Natural killer cell (primary cell): ENCODE measurements at regions of chr21 and their contacts with region 1.

Region 1: GRCh38 chr21:44709426-44710293 is 1.7 kb downstream of the TSPEAR start:
- DNase-seq: peak in 1 of 2 donors; percentile 53
- ATAC-seq: peak in 2 of 3 donors; percentile 21 to 44
- H3K4me3 ChIP-seq: no peak overlapping the region
- H3K4me3 Mint-ChIP-seq: no peak overlapping the region
- H3K27ac ChIP-seq: no peak overlapping the region
- H3K27ac Mint-ChIP-seq: peak overlapping the region in 1 of 2 donors; percentile 40
- H3K4me1 ChIP-seq: peaks cover 37% of the 10 kb centered on the region
- H3K4me1 Mint-ChIP-seq: peaks cover 9 to 22% of the 10 kb centered on the region in 2 donors
- H3K27me3 ChIP-seq: peaks cover 78% of the 10 kb centered on the region
- H3K27me3 Mint-ChIP-seq: peaks cover 60 to 65% of the 10 kb centered on the region in 2 donors
- CTCF ChIP-seq: no peak

Region 2: DNA sequence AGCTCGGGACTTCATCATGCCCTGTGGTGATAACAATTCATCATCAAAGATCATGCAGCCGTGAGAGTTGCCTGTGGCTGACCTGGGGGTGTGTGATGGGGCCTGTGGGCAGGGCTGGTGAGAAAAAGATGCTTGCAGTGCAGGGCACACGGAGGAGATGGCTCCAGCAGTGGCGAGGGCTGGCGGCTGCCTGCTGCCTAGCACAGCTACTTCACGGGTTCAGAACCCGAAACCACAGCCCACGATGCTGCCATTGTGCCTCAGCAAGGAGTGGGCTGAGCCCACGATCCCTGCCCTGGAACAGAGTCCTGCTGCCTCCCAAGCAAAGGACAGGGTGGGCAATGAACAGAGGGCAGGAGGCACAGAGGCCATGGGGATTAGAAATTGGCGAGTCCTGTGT is 83.4 kb before region 1 on chr21:
- intact Hi-C with region 1: loop called (anchors 10 kb)
- DNase-seq: peak; percentile 65 to 66
- ATAC-seq: peak; percentile 86 to 99 (median 95)
- H3K4me3 ChIP-seq: no peak overlapping the region
- H3K4me3 Mint-ChIP-seq: peak overlapping the region; percentile 71
- H3K27ac ChIP-seq: peak overlapping the region; percentile 8
- H3K27ac Mint-ChIP-seq: peak overlapping the region; percentile 74 to 86
- H3K4me1 ChIP-seq: peaks cover 56% of the 10 kb centered on the region
- H3K4me1 Mint-ChIP-seq: peaks cover 43 to 59% of the 10 kb centered on the region in 2 donors
- H3K27me3 ChIP-seq: no peaks in the 10 kb centered on the region
- H3K27me3 Mint-ChIP-seq: peaks cover 0 to 3% of the 10 kb centered on the region in 2 donors
- CTCF ChIP-seq: no peak

Region 3: GRCh38 chr21:44752634-44753291 is 43.1 kb after region 1 on chr21:
- intact Hi-C with region 1: no loop called
- DNase-seq: no peak
- ATAC-seq: no peak
- H3K4me3 ChIP-seq: no peak overlapping the region
- H3K4me3 Mint-ChIP-seq: no peak overlapping the region
- H3K27ac ChIP-seq: no peak overlapping the region
- H3K27ac Mint-ChIP-seq: no peak overlapping the region
- H3K4me1 ChIP-seq: no peaks in the 10 kb centered on the region
- H3K4me1 Mint-ChIP-seq: no peaks in the 10 kb centered on the region
- H3K27me3 ChIP-seq: peaks cover 3% of the 10 kb centered on the region
- H3K27me3 Mint-ChIP-seq: peaks cover 8% of the 10 kb centered on the region in 2 donors
- CTCF ChIP-seq: no peak